ENCODE measurements at regions of chr5 and their contacts with region 1.

Region 1: GRCh38 chr5:123344816-123345426 is 78.3 kb downstream of the CEP120 start:
- DNase-seq: no peak
- H3K4me3 ChIP-seq: no peak overlapping the region
- H3K27ac ChIP-seq: no peak overlapping the region
- H3K27me3 ChIP-seq: no peaks in the 10 kb centered on the region
- CTCF ChIP-seq: peak; percentile 88

Region 2: DNA sequence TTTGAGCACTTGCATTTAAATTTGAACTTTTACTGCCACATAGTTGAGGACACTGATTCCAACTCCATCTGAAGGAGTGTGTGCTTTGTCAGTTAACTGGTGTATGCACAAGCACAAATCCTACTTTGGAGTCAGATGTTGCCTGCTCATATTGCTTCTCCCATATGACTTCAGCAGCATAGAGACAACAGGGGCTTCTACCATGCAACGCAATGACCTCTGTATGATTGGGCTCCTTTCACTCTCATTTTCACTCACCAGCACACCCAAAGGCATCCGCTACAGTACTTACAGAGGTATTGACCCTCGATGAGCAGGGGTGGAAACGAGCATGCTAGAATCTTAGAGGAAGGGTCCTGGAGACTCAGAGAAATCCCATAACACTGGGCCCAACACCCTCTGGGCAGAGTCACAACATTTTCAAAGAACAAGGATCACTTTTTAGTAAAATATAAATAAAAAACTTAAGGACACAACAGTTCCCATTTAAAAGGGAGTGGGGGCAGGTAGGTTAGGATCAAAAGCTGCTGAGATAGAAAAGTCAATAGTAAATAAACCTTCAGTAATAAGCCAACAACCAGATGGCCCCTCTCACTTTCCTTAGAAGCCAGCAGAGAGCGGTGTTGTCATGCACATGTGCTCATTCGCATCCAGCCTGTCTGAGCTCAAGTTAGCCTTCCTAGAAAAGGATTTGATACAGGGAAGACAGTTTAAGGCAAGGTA is 829.1 kb before region 1 on chr5:
- CTCF ChIA-PET with region 1: interaction called, 13 read pairs
- POLR2A ChIA-PET with region 1: no interaction called
- DNase-seq: peak; percentile 57
- H3K4me3 ChIP-seq: no peak overlapping the region
- H3K27ac ChIP-seq: no peak overlapping the region
- H3K27me3 ChIP-seq: peaks cover 5% of the 10 kb centered on the region
- CTCF ChIP-seq: peak; percentile 85

Region 3: DNA sequence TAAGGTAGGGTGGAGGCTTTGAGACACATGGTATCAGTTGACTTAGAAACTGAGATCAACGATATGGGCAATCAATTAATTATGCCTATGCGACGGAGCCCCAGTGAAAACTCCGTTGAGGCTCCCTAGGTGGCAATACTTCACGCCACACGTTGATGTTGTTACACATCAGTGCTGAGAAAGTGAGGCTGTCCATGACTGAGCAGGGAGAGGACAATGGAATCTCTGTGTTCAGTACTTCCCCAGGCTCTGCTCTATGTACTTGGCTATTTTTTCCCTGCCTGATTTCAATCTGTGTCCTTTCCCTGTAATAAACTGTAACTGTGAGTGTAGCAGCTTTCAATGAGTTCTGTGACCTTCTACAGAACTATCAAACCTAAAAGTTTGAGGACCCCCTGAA is 821.1 kb before region 1 on chr5:
- CTCF ChIA-PET with region 1: interaction called, 15 read pairs
- POLR2A ChIA-PET with region 1: no interaction called
- DNase-seq: no peak
- H3K4me3 ChIP-seq: no peak overlapping the region
- H3K27ac ChIP-seq: no peak overlapping the region
- H3K27me3 ChIP-seq: peaks cover 2% of the 10 kb centered on the region
- CTCF ChIP-seq: no peak

Region 4: DNA sequence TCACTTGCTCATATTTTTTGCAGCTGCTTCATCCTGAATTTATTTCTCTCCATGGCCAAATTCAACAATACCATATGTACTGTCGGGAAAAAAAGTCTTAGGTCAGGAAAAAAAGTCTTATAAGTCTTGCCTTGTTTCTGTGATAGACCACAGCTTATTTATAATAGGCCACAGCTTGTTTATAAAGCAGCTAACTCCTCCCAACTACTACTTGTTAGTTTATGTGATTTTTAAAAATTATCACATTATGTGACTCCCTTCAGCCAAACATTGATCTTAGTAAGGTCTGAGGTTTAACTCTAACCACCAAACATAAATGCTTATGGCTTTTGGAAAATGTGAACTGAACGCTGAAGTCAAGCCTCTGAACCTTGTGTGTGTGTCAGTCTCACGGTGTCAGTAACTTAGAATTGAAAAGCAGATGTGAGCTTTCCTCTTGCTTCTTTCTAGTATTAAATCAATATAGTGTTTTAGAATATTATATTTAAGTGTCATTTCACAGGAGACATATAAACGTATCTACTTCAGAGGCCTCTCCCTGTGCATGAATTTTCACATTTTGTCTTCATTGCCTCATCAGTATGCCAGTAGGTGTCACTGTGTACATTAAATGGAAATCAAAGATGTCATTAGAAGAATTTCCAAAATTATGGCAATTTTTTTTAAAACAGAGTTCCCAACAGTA is 448.2 kb before region 1 on chr5:
- CTCF ChIA-PET with region 1: interaction called, 12 read pairs
- POLR2A ChIA-PET with region 1: no interaction called
- DNase-seq: peak; percentile 70
- H3K4me3 ChIP-seq: no peak overlapping the region
- H3K27ac ChIP-seq: no peak overlapping the region
- H3K27me3 ChIP-seq: no peaks in the 10 kb centered on the region
- CTCF ChIP-seq: peak; percentile 58

Region 5: DNA sequence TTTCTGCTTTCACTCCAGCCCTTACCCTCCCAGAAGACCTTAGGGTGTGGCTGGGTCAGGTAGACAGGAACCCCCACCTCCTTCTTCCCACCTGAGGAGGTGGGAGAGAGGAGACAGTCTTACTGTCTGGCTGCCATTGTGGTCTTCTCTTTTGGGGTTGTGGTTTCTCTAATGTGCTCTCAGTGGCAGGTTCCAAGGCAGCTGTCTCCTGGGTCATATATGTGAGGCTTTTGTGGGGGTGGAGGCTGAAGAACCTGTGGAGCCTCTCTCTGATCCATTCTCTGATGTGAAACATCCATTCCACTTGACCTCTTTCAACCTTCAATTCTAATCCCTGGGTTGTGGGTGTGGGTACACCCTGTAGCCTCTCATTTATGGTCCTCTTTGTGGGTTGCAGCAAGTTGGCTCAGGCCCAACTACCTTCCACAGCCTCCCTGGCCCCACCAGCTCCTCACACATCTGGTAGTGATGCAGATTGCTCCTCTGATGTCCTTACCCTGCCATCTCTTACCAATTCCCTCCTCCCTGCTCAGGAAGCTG is 40.1 kb before region 1 on chr5:
- CTCF ChIA-PET with region 1: interaction called, 11 read pairs
- POLR2A ChIA-PET with region 1: no interaction called
- DNase-seq: no peak
- H3K4me3 ChIP-seq: no peak overlapping the region
- H3K27ac ChIP-seq: no peak overlapping the region
- H3K27me3 ChIP-seq: no peaks in the 10 kb centered on the region
- CTCF ChIP-seq: no peak

Region 6: DNA sequence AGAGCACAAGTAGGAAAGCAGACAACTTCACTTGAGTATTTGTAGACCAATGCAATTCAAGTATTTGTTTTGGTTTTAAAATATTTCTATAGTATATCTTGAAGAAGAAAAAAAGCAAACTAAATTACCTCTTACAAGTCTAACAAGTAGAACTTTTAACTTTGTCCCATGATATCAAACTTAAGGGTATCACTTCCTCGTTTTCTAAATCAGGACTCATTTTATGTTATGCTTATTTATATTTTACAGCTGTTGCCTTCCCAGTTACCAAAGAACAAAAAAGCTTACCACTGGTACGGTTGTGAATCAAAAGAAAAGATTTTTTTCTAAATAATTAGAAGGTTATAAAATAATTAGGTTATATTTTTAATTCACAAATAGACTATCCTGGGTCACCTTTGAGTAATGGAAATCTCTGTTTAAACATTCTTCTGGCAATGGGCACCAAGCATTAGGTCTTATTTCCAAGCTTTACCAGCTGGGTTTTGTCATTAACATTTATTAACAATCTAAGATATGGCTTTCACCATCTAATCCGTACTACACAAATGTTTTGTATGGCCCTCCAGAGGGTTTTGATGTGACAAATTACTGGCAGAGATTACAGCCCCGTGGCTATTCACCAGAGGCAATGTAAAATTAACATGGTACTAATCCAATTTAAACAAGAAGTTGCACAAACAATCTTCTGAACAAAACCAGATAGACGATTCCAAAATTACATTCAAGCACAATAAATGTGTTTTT is 14.7 kb after region 1 on chr5:
- CTCF ChIA-PET with region 1: interaction called, 13 read pairs
- POLR2A ChIA-PET with region 1: no interaction called
- DNase-seq: no peak
- H3K4me3 ChIP-seq: no peak overlapping the region
- H3K27ac ChIP-seq: no peak overlapping the region
- H3K27me3 ChIP-seq: no peaks in the 10 kb centered on the region
- CTCF ChIP-seq: no peak

Region 7: DNA sequence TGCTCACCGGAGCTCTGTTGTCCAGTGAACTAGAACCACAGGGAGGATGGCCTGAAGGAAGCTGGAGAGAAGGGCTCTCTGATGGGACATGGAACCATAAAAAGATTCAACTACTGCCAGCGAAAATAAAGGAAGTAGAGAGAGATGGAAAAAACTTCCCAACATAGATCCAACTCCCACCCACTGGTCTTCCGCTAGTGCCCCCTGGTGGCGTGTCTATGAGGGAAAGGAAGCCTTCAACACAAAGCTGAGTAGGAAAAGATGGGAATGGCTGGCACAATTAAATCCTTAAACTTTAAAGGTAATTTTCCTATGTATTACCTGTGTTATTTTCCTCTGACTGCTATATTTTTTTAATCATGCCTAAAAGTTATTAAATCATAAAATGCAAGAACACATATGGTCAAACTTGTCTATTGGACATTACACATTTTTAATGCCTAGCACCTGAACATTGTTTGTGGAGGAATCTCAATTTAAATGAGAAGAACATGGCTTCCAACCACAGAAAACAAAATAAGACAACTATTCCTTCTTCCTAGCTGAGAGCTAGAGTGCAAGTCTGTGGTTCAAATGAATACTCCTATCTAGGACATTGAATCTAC is 26.8 kb after region 1 on chr5:
- CTCF ChIA-PET with region 1: interaction called, 11 read pairs
- POLR2A ChIA-PET with region 1: no interaction called
- DNase-seq: no peak
- H3K4me3 ChIP-seq: no peak overlapping the region
- H3K27ac ChIP-seq: no peak overlapping the region
- H3K27me3 ChIP-seq: no peaks in the 10 kb centered on the region
- CTCF ChIP-seq: peak; percentile 56

Measured in AG04450 (cell line).